HEK293 (cell line): ENCODE measurements at regions of chr16 and their contacts with region 1.

Region 1: GRCh38 chr16:1863681-1864460 is 8.1 kb downstream of the MEIOB start:
- H3K4me3 ChIP-seq: no peak overlapping the region
- H3K27ac ChIP-seq: no peak overlapping the region
- H3K4me1 ChIP-seq: no peaks in the 10 kb centered on the region; the same call in 1 of the 2 replicates
- CTCF ChIP-seq: no peak

Region 2: DNA sequence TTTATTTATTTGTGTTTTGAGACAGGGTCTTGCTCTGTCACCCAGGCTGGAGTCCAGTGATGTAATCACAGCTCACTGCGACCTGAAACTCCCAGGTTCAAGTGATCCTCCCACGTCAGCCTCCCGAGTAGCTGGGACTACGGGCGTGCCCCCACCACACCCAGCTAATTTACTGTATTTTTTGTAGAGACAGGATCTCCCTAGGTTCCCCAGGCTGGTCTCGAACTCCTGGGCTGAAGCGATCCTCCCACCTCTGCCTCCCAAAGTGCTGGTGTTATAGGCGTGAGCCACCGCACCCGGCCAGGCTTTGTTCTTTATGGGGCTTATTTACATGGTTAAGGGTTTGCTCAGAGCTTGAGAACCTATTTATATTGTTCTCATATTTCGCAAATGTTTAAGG is 13.9 kb after region 1 on chr16:
- CTCF ChIA-PET with region 1: interaction called, 11 read pairs
- POLR2A ChIA-PET with region 1: no interaction called
- H3K4me3 ChIP-seq: no peak overlapping the region
- H3K27ac ChIP-seq: no peak overlapping the region
- H3K4me1 ChIP-seq: no peaks in the 10 kb centered on the region
- CTCF ChIP-seq: no peak

Region 3: DNA sequence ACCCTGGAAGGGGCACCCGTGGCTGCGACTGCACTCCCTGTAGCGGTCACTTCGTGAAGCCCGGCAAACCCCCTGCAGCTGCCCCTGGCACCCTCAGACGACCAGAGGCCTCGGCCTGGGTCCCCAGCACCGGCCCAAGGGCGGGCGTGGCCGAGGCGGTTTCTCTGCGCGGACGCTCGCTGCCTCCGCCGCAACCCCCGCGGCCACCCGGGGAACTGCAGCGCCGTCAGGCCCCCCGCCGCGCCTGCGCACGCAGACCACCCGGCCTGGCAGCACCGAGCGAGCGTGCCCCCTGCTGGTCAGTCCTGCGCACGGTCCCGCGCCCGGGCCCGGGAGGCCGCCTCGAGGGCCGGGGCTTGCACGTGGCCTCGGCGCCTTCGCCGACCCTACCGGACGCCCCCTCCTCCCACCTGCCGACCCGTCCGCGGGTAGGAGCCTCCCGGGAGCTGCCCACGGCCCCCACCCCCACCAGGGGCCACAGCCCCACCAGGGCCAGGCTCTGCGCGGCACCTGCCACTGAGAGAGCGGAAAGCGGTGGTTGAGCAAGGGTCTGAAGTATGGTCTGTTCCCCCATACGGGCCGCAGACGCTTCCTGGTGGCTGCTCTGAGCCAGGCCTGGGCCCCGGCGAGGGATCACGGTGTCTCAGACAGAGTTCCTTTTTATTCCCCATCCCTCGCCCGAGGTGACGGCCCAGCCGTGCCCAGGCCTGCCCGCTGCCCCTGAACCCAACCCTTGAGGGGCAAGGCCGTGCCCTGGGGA is 65.9 kb after region 1 on chr16:
- CTCF ChIA-PET with region 1: interaction called, 57 read pairs
- POLR2A ChIA-PET with region 1: interaction called, 3 read pairs
- H3K4me3 ChIP-seq: peak overlapping the region; percentile 44
- H3K27ac ChIP-seq: peak overlapping the region; percentile 16; the same call in 1 of the 2 replicates
- H3K4me1 ChIP-seq: no peaks in the 10 kb centered on the region
- CTCF ChIP-seq: peak; percentile 59; the same call in 1 of the 2 replicates

Region 4: GRCh38 chr16:2121853-2122252 is 258.0 kb after region 1 on chr16:
- CTCF ChIA-PET with region 1: no interaction called
- POLR2A ChIA-PET with region 1: no interaction called
- H3K4me3 ChIP-seq: no peak overlapping the region
- H3K27ac ChIP-seq: no peak overlapping the region
- H3K4me1 ChIP-seq: peaks cover 10% of the 10 kb centered on the region
- CTCF ChIP-seq: no peak